ENCODE measurements at regions of chr14 and their contacts with region 1.

Region 1: DNA sequence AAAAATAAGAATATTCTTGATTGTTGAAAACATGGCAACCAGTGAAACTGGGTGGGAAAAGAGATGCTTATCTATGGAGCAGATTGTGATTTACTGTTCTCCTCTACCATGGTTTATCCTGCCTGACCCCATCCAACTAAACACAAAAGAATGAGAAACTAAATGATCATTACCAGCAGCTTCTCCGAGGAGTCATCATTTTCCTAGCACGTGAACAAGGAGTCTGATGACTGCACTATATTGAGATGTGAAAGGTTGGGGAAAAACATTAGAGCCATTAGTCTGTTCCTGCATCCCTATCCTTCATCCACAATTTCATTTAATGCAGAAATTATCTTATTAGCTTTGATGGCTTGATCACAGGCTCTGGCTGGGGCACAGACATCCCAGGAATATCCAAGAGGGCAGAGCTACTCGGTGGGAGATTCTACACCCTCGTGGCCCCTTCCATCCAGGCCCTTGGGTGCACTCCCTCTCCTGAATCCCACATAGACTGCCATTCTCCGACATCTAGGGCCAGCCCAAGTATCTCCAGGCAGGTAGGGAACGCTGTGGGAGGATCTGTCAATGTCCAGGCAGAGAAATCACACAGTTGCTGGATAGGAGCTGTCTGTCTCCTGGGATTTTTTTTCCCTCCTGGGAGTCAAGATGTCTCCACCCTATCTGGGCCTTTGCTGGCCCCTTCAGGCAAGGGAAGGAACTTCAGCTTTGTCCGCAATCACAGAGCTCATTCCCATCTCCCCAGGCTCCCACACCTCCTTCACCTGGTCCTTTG is 43.3 kb upstream of the DHRS4 start:
- DNase-seq: peak; percentile 30
- ATAC-seq: peak; percentile 33
- H3K4me3 Mint-ChIP-seq: no peak overlapping the region
- H3K27ac Mint-ChIP-seq: no peak overlapping the region
- H3K4me1 Mint-ChIP-seq: no peaks in the 10 kb centered on the region
- H3K27me3 Mint-ChIP-seq: peaks cover 19% of the 10 kb centered on the region

Region 2: DNA sequence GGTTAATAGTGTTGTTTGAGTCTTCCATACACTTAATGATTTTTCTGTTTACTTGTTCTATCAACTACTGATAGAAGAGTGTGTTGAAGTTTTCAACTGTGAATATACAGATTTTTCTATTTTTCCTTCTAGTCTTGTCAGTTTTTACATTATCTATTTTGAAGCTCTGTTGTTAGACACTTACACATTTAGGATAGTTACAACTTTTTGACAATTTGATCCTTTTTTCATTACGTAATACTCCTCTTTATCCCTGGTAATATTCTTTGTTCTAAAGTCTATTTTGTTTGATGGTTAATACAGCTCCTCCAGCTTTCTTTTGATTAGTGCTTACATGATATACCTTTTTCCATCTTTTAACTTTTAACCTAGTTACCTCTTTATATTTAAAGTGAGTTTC is 229.0 kb before region 1 on chr14:
- CTCF ChIA-PET with region 1: no interaction called
- POLR2A ChIA-PET with region 1: no interaction called
- DNase-seq: no peak
- ATAC-seq: no peak
- H3K4me3 Mint-ChIP-seq: no peak overlapping the region
- H3K27ac Mint-ChIP-seq: no peak overlapping the region
- H3K4me1 Mint-ChIP-seq: no peaks in the 10 kb centered on the region
- H3K27me3 Mint-ChIP-seq: peaks cover 26% of the 10 kb centered on the region

Region 3: DNA sequence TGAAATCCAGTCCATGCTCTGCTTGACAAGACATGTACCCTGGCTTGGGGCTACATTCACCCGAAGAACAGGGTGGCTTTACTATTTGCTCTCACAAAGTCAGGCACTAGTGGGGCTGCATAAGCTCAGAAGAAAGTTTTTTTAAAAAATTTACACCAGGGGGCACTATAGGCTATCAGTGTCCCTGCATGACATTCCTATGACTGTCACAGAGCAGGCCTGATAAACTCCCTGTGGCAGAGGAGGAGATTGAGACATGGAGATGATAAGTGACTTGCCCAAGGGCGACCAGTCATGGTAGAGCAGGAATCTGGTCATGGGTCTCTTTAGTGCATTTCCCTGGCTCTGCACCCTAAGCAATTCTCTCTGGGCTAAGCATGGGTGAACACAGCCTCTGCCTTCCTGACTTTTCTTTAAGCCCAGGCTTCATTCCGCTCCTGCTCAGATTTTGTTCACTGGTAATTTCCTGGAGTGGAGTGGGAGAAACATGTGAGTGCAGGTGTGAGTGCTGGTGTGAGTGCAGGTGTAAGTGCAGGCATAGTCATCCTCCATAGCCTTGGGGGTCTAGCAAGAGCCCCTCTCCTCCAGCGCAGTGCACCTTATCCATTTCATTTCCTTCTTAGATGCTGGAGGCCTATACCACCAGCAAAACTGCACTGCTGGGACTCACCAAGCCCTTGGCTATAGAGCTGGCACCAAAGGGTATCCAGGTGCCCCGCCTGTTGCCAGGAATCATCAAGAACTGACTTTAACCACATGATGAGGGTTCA is 182.5 kb before region 1 on chr14:
- CTCF ChIA-PET with region 1: interaction called, 12 read pairs
- POLR2A ChIA-PET with region 1: no interaction called
- DNase-seq: peak; percentile 21
- ATAC-seq: peak; percentile 67
- H3K4me3 Mint-ChIP-seq: no peak overlapping the region
- H3K27ac Mint-ChIP-seq: no peak overlapping the region
- H3K4me1 Mint-ChIP-seq: no peaks in the 10 kb centered on the region
- H3K27me3 Mint-ChIP-seq: peaks cover 3% of the 10 kb centered on the region

Measured in activated CD8-positive, alpha-beta T cell treated with anti-CD3 and anti-CD28 coated beads, Interleukin-2, amount 10 ng/mL, durations not matched to agents 7 days and 5 days (primary cell).